ENCODE measurements at regions of chr14 and their contacts with region 1.

Region 1: DNA sequence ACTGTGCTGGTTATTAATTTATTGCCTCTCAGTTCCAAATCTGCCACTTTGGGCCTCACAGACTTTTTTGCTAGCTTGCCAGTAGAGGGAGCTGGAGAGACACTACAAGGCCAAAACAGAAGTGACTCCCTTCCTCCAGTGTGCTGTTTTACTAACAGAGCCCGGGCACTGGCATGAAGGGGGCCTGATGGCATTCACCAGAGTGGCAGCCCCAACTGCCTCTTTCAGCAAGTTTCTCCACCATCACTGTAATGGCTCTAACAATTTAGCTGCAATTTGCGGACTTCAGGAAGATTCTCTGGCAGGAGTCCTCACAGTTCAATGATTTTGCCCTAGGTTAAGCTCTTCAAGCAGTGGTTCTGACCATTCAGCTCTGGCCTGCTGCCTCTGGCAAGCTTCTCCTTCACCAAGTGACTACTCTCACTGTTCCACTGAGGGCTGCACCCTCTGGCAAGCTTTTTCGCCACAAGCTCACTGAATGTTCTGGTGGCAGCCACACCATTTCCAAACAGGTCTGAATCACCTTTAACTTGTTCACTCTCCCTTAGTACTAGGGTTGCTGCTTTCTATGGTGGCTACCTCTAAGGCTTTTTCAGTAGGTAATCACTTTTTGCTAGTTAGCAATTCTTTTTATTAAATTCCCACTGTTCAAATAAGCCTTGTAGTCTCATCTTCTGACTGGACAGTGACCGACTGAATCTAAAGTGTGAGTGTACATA is 104.9 kb downstream of the ZC3H14 start:
- DNase-seq: peak; percentile 71 to 82
- H3K4me3 ChIP-seq: no peak overlapping the region
- H3K27ac ChIP-seq: peak overlapping the region; percentile 35 to 47 (median 43)
- H3K4me1 ChIP-seq: peaks cover 8 to 12% of the 10 kb centered on the region in 2 donors
- H3K27me3 ChIP-seq: no peaks in the 10 kb centered on the region
- CTCF ChIP-seq: peak in 5 of 6 experiments; percentile 52 to 85 (median 83)
- POLR2A ChIP-seq: no peak

Region 2: GRCh38 chr14:88870777-88871176 is 203.1 kb after region 1 on chr14:
- intact Hi-C with region 1: loop called (anchors 5 kb)
- DNase-seq: no peak
- H3K4me3 ChIP-seq: no peak overlapping the region
- H3K27ac ChIP-seq: no peak overlapping the region
- H3K4me1 ChIP-seq: no peaks in the 10 kb centered on the region
- H3K27me3 ChIP-seq: no peaks in the 10 kb centered on the region
- CTCF ChIP-seq: no peak
- POLR2A ChIP-seq: no peak

Measured in thyroid gland (tissue), 4 donors.